Activated CD4-positive, alpha-beta memory T cell treated with anti-CD3 and anti-CD28 coated beads, Interleukin-2, amount 10 ng/mL, durations not matched to agents 7 days and 5 days (primary cell): ENCODE measurements at regions of chr7 and their contacts with region 1.

Region 1: GRCh38 chr7:101287032-101287431 is 34.6 kb downstream of the IFT22 start:
- DNase-seq: no peak
- H3K4me3 Mint-ChIP-seq: no peak overlapping the region
- H3K27ac Mint-ChIP-seq: no peak overlapping the region
- H3K4me1 Mint-ChIP-seq: peaks cover 27% of the 10 kb centered on the region
- H3K27me3 Mint-ChIP-seq: peaks cover 12% of the 10 kb centered on the region

Region 2: DNA sequence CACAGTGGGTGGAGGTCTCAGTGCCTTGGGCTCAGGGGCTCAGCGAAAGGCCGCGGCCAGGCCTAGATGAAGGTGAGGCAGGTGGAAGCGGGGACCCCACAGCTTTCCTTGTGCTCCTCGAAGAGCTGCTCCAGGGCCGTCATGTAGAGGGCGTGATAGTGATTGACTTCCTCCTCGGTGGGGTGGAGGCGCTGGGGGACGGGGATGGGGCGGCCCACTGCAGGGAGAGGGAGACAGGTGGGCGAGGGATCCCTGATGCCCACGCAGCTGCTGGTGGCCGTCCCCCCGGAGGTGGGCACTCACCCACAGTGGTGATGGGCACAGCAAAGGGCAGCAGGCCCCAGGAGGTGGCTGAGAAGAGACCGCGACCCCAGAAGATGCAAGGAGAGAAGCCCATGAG is 91.1 kb before region 1 on chr7:
- CTCF ChIA-PET with region 1: interaction called, 64 read pairs
- POLR2A ChIA-PET with region 1: no interaction called
- DNase-seq: no peak
- H3K4me3 Mint-ChIP-seq: no peak overlapping the region
- H3K27ac Mint-ChIP-seq: no peak overlapping the region
- H3K4me1 Mint-ChIP-seq: peaks cover 8% of the 10 kb centered on the region
- H3K27me3 Mint-ChIP-seq: peaks cover 14% of the 10 kb centered on the region

Region 3: GRCh38 chr7:101244375-101245146 is 42.5 kb before region 1 on chr7 and contains the start of gene FIS1:
- CTCF ChIA-PET with region 1: interaction called, 17 read pairs
- POLR2A ChIA-PET with region 1: no interaction called
- DNase-seq: peak; percentile 94
- H3K4me3 Mint-ChIP-seq: peak within 1 kb of the TSS; percentile 96
- H3K27ac Mint-ChIP-seq: peak within 1 kb of the TSS; percentile 90
- H3K4me1 Mint-ChIP-seq: peaks cover 31% of the 10 kb centered on the region
- H3K27me3 Mint-ChIP-seq: no peaks in the 10 kb centered on the region
- total RNA-seq, gene FIS1: 94.5 to 97.6 TPM

Region 4: GRCh38 chr7:101251871-101252659 is 35.0 kb before region 1 on chr7:
- CTCF ChIA-PET with region 1: interaction called, 16 read pairs
- POLR2A ChIA-PET with region 1: no interaction called
- DNase-seq: peak; percentile 99
- H3K4me3 Mint-ChIP-seq: peak overlapping the region; percentile 92
- H3K27ac Mint-ChIP-seq: peak overlapping the region; percentile 92
- H3K4me1 Mint-ChIP-seq: peaks cover 26% of the 10 kb centered on the region
- H3K27me3 Mint-ChIP-seq: peaks cover 2% of the 10 kb centered on the region